Adrenal gland (tissue), 19 donors: ENCODE measurements at regions of chr16 and their contacts with region 1.

Region 1: DNA sequence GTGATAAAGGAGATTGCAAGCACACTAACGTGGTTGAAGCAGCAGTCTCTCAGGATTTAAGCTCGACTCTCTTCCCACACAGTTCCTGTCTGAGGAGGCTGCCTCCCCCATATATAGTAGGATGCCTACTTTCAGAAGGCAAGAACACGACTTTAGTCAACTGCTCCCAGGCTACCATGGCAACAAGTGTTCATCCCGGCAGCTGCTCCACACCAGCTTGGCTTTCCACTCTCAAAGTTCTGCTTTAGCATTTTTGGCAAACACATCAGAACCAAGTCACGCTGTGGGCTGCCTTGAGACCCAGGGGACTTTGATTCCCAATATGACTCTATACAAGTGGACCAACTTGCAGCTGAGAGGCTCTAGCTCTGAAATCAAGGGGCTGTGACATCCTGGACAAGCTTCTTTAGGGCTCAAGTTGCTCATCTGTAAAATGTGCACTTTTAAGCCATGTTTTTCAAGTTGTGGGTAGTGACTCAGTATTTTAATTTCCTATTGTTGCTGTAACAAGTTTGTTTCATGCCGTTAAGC is 16.5 kb downstream of the ZP2 start:
- DNase-seq: no peak
- H3K4me3 ChIP-seq: no peak overlapping the region
- H3K27ac ChIP-seq: no peak overlapping the region
- H3K4me1 ChIP-seq: no peaks in the 10 kb centered on the region
- H3K27me3 ChIP-seq: peaks cover 11% of the 10 kb centered on the region
- CTCF ChIP-seq: no peak
- POLR2A ChIP-seq: no peak

Region 2: DNA sequence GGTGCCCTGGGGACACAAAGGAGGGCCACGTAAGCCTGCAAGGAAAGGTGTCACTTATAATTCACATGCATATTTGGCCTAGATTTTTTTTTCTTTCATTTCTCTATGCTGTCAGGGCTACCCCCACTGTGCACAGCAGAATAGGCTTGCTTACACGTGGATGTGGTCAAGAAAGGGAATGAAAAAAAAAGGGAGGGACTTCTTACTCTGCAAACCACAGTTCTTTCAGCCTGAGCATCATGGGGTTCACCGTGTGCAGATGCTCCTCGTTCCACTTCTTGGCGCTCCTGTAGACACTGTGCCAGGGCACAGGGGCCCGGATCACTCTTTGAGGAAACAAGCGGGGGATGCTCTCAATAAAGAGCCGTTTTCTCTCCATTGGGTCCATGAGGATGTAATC is 60.8 kb before region 1 on chr16:
- intact Hi-C with region 1: no loop called
- DNase-seq: no peak
- H3K4me3 ChIP-seq: no peak overlapping the region
- H3K27ac ChIP-seq: no peak overlapping the region
- H3K4me1 ChIP-seq: no peaks in the 10 kb centered on the region
- H3K27me3 ChIP-seq: no peaks in the 10 kb centered on the region
- CTCF ChIP-seq: no peak
- POLR2A ChIP-seq: no peak

Region 3: DNA sequence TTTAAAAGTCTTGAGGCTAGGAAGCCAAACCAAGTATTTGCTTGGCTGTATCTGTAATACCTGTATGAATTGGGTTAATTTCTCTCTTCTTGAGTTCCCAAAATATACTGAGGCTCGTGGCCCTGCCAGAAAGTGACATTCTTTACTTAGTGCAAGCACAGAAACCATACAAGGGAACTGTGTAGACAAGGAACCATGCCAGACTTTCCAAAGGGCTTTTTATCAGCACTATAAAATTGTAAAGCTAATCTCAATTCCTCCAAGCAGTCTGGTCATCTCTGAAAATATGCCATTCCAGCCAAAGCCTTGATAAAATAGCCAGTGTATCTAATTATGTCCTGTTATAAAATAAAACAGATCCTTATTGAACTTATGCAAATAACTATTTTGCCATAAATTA is 90.5 kb after region 1 on chr16:
- intact Hi-C with region 1: loop called in 1 of 2 experiments (anchors 5 kb)
- DNase-seq: no peak
- H3K4me3 ChIP-seq: no peak overlapping the region
- H3K27ac ChIP-seq: no peak overlapping the region
- H3K4me1 ChIP-seq: peaks cover 0 to 9% of the 10 kb centered on the region in 2 donors
- H3K27me3 ChIP-seq: peaks cover 53% of the 10 kb centered on the region
- CTCF ChIP-seq: no peak
- POLR2A ChIP-seq: no peak